HepG2 (cell line): ENCODE measurements at regions of chr14 and their contacts with region 1.

Region 1: DNA sequence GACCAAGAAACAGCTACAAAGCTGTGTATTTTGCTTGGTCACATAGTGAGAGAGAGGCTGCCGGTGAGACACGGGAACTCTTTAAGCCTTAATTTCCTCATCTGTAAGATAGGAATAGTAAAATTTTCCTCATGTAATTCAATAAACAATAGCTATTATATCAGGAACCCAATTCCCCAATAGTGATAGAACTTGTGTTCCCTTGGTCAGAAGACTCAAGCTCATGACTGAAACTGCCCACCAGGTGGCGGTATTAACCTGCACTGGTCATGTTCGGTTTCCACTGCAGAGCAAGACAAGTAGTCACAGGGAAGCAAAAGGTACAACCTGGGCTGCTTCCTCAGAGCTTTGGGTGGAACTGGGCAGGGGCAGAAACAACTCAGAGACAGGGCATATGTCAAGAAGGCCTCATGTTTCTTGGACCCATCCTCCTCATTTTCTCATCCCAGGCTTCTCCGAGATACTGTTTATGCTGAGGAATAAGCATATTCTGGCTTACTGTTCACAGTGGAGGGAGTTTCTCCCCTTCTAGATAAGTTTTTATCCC is 4.2 kb upstream of the AJUBA start:
- DNase-seq: peak; percentile 93
- ATAC-seq: peak; percentile 56
- H3K4me3 ChIP-seq: no peak overlapping the region
- H3K27ac ChIP-seq: no peak overlapping the region
- H3K4me1 ChIP-seq: peaks cover 37% of the 10 kb centered on the region
- H3K27me3 ChIP-seq: no peaks in the 10 kb centered on the region; a peak in 1 of 5 replicates
- CTCF ChIP-seq: no peak
- EP300 ChIP-seq: 0 out of 4 replicates have a peak, but pooled peaks of 1 of the 2 experiments have one; percentile 14
- POLR2A ChIP-seq: no peak
- RAD21 ChIP-seq: peak; percentile 96

Region 2: DNA sequence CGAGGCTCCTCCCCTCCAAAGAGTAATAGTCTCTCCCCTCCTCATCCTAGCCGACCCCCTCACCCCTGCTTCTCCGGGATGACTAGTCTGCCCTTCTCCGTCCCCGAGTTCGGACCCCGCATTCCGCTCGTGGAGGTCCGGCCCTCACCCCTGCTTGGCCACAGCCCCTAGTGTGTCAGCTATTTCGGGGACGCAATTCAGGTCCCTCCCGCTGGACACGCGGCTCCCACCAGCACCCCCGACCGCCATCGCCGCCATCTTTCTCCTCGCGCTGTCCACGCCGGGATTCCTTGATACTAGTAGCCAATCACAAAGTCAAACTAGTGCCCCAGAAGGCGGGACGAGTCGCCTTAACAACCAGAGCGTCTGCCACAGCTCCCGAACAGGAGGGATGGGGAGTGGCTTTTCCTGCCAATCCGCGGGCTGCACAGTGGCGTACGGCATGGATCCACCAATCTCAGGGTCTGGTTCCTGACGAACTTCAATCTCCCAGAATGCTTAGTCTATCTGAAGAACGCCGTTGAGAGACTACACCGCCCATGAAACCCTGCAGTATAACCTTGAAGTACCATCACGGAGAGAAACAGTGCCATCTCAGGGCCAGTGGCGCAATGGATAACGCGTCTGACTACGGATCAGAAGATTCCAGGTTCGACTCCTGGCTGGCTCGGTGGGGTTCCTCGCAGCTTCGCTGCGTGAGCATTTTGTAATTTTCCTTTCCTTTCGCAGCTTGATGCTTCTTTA is 57.3 kb before region 1 on chr14 and contains the start of gene PRMT5:
- CTCF ChIA-PET with region 1: interaction called, 17 read pairs
- POLR2A ChIA-PET with region 1: interaction called, 112 read pairs
- in situ Hi-C with region 1: no loop called
- intact Hi-C with region 1: loop called (anchors 1 kb)
- DNase-seq: peak; percentile 100
- ATAC-seq: peak; percentile 98
- H3K4me3 ChIP-seq: peak within 1 kb of the TSS; percentile 77 to 98 (median 92)
- H3K27ac ChIP-seq: peak within 1 kb of the TSS; percentile 78
- H3K4me1 ChIP-seq: peaks cover 27% of the 10 kb centered on the region
- H3K27me3 ChIP-seq: no peaks in the 10 kb centered on the region; a peak in 1 of 5 replicates
- CTCF ChIP-seq: peak; percentile 60
- EP300 ChIP-seq: peak; percentile 56 to 82; a peak in 3 of 4 replicates
- POLR2A ChIP-seq: peak; percentile 96 to 98
- RAD21 ChIP-seq: peak; percentile 74
- total RNA-seq, gene PRMT5: 210 and 289 TPM in 2 replicates

Region 3: GRCh38 chr14:22955702-22956569 is 30.6 kb before region 1 on chr14:
- CTCF ChIA-PET with region 1: interaction called, 3 read pairs
- POLR2A ChIA-PET with region 1: interaction called, 1,670 read pairs
- in situ Hi-C with region 1: no loop called
- intact Hi-C with region 1: no loop called
- DNase-seq: peak; percentile 48
- ATAC-seq: peak; percentile 27
- H3K4me3 ChIP-seq: peak overlapping the region; percentile 73 to 78 (median 77)
- H3K27ac ChIP-seq: peak overlapping the region; percentile 78
- H3K4me1 ChIP-seq: peaks cover 47% of the 10 kb centered on the region
- H3K27me3 ChIP-seq: no peaks in the 10 kb centered on the region; a peak in 1 of 5 replicates
- CTCF ChIP-seq: no peak
- EP300 ChIP-seq: peak in 1 of 2 experiments; percentile 25; a peak in 1 of 4 replicates
- POLR2A ChIP-seq: no peak
- RAD21 ChIP-seq: no peak

Region 4: DNA sequence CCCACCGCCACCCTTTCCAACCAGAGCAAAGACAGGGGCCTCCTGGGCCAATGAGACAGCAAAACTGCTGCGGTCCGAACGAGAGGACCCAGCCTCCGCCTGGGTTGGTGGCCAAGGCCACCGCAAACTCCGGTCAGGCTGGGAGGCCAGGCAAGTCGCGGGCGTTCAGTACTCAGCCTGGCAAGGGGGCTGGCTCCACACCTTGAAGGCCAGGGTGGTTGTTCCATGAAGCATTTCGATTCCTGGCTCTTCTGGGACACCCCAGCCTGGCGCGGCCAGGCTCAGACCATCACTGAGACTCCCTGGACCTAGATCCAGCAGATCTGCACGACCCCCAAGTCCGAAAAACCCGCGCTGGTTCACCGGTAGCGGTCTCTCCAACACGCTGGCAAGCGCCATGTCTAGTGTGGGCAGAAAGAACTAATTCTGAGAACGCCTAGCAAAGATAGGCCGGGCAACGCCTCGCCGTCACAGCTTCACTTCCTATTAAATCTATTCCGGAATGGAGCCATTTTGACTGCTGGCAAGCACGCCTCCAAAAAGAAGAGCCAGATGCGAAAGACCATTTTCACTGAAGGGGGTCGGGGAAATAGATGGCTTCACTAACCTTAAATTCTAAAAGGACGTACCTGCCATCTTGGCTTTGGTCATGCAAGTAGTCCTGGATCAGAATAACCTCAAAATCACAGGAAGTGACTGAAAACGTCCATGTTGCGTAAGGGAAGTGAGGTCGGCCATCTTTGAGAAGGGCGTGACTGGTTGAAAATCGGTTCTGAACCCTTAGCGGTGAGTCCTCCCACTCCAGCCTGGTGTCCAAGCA is 48.1 kb after region 1 on chr14 and contains the start of gene PSMB5:
- CTCF ChIA-PET with region 1: no interaction called
- POLR2A ChIA-PET with region 1: interaction called, 21 read pairs
- in situ Hi-C with region 1: no loop called
- intact Hi-C with region 1: loop called (anchors 2 kb)
- DNase-seq: peak; percentile 100
- ATAC-seq: peak; percentile 96
- H3K4me3 ChIP-seq: peak within 1 kb of the TSS; percentile 78 to 86 (median 80)
- H3K27ac ChIP-seq: peak within 1 kb of the TSS; percentile 90
- H3K4me1 ChIP-seq: peaks cover 38% of the 10 kb centered on the region
- H3K27me3 ChIP-seq: no peaks in the 10 kb centered on the region; a peak in 1 of 5 replicates
- CTCF ChIP-seq: peak; percentile 14
- EP300 ChIP-seq: peak; percentile 3 to 52; a peak in 2 of 4 replicates
- POLR2A ChIP-seq: peak in 1 of 2 experiments; percentile 98; a peak in 2 of 4 replicates
- RAD21 ChIP-seq: peak; percentile 49; the same call in 1 of the 2 replicates
- total RNA-seq, gene PSMB5: 871 and 1,316 TPM in 2 replicates

Region 5: DNA sequence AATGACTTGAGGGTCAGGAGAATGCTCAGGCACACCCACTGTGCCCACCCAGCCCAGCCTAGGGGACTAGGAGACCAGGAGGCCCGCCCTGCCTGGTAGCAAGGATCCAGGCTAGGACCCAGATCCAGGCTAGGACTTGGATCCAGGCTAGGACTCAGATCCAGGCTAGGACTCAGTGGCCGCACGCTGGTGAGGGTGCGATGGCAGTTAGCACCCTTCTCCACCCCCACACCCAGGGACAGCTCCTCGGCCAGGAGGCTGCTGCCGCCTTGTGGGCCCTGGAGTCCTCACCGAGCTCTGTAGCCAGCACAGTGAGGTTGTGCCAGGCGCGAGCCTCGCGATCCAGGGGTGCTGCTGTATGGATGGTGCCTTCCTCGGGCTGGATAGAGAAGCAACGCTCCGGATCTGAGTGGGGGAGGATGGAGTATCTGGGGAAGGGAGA is 65.6 kb after region 1 on chr14:
- CTCF ChIA-PET with region 1: interaction called, 173 read pairs
- POLR2A ChIA-PET with region 1: interaction called, 70 read pairs
- in situ Hi-C with region 1: loop called (anchors 5 kb)
- intact Hi-C with region 1: loop called (anchors 1 kb)
- DNase-seq: peak; percentile 65
- ATAC-seq: peak; percentile 62
- H3K4me3 ChIP-seq: no peak overlapping the region
- H3K27ac ChIP-seq: no peak overlapping the region
- H3K4me1 ChIP-seq: peaks cover 25% of the 10 kb centered on the region
- H3K27me3 ChIP-seq: peaks cover 0 to 6% of the 10 kb centered on the region in 2 experiments; a peak in 1 of 5 replicates
- CTCF ChIP-seq: peak; percentile 99
- EP300 ChIP-seq: no peak
- POLR2A ChIP-seq: no peak
- RAD21 ChIP-seq: peak; percentile 97

Region 6: DNA sequence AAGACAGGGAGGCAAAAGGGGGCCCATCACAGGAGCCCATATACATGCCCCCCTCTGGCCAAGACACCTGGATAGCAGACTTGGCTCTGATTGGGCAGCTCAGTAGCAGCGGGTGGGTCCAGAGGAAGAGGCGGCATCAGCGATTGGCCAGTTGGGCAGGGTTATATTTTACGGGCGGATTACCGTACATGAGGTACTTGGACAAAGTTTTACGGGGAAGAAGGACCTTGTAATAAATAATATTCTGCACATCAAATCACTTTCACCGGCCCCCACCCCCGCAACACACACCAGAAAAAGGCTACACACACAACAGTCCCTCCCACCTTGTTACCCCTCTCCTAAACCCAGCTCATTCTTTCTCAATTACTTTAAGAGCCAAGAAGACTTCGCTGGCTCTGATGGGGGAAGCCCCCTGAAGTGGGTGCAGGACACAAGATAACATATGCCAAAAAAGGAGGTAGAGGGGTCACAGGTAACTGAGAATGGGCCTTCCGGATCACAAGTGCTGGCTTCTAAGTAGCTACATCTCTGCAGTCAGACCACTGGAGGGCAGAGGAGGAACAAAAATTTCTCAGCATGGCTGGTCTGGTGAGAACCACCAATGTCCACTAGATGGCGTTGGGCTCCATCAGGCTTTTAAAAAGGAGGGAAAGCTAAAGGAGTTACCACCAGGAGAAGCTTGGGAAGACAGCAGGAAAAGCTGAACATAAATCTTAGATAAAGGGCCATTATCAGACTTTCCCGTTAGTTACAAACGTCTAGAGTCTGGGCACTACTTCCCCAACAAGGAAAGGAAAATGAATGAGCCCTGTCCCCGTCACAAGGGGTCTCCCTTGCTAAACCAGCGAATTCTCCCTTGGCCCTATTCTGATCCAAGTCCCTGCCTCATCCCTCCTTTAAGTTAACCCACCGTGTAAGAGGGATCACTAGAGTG is 82.2 kb after region 1 on chr14:
- CTCF ChIA-PET with region 1: interaction called, 9 read pairs
- POLR2A ChIA-PET with region 1: interaction called, 22 read pairs
- in situ Hi-C with region 1: no loop called
- intact Hi-C with region 1: no loop called
- DNase-seq: peak; percentile 98
- ATAC-seq: peak; percentile 79
- H3K4me3 ChIP-seq: no peak overlapping the region
- H3K27ac ChIP-seq: peak overlapping the region; percentile 5
- H3K4me1 ChIP-seq: peaks cover 42% of the 10 kb centered on the region
- H3K27me3 ChIP-seq: no peaks in the 10 kb centered on the region; a peak in 1 of 5 replicates
- CTCF ChIP-seq: peak; percentile 99
- EP300 ChIP-seq: no peak; a peak in 1 of 4 replicates
- POLR2A ChIP-seq: peak in 1 of 2 experiments; percentile 24; a peak in 2 of 4 replicates
- RAD21 ChIP-seq: peak; percentile 94